Heart right ventricle (tissue), 16 donors: ENCODE measurements at regions of chr11 and their contacts with region 1.

Region 1: GRCh38 chr11:90453525-90453924 is 230.7 kb upstream of the CHORDC1 start:
- DNase-seq: no peak
- ATAC-seq: no peak
- H3K4me3 ChIP-seq: no peak overlapping the region
- H3K27ac ChIP-seq: no peak overlapping the region
- H3K4me1 ChIP-seq: peaks cover 0 to 1% (median 0%) of the 10 kb centered on the region in 9 donors
- H3K27me3 ChIP-seq: no peaks in the 10 kb centered on the region
- CTCF ChIP-seq: no peak

Region 2: DNA sequence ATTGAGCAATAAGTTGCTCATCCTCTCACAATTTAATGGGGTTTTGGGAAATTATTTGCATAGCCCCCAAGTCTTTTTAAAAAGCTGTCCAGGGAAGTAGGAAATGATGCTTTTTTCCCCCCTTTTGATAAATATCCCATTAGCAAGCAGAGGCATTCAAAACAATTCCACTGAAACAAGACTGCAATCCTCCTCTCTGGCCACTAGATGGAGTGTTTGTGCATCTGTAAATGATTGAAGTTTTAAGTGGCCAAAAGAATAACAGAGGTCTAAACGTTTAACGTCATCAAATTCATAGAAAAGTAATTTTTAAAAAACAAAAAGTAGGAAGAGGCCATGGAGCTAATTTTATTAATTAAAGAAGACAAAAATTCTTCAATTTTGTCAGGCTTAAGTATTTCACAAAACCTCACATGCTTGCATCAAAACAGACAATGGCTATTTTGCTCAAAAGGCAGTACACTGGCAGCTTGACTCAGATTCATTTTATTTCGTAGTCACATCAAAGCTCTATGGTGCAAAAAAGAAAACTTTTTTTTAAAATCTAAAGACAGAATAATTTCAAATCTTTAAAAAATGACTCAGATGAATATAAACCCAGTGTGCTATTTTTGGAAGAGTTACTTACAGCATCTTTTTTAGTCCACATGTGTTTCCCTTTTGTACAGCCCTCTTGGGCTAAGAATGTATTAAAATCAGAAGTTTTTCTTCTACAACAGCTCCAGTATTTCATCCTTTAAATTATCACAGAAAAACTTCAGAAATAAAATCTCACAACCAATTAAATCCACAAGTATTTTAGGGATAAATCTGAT is 248.5 kb before region 1 on chr11:
- intact Hi-C with region 1: loop called in 1 of 10 experiments (anchors 10 kb)
- DNase-seq: no peak
- ATAC-seq: no peak
- H3K4me3 ChIP-seq: no peak overlapping the region
- H3K27ac ChIP-seq: no peak overlapping the region
- H3K4me1 ChIP-seq: peaks cover 0 to 14% (median 0%) of the 10 kb centered on the region in 9 donors
- H3K27me3 ChIP-seq: no peaks in the 10 kb centered on the region
- CTCF ChIP-seq: peak; percentile 76 to 93 (median 87)

Region 3: GRCh38 chr11:90288212-90288821 is 165.2 kb before region 1 on chr11:
- intact Hi-C with region 1: loop called in 3 of 10 experiments (anchors 2 to 5 kb)
- DNase-seq: no peak
- ATAC-seq: no peak
- H3K4me3 ChIP-seq: no peak overlapping the region
- H3K27ac ChIP-seq: no peak overlapping the region
- H3K4me1 ChIP-seq: no peaks in the 10 kb centered on the region
- H3K27me3 ChIP-seq: peaks cover 0 to 2% (median 0%) of the 10 kb centered on the region in 7 donors
- CTCF ChIP-seq: peak; percentile 30 to 75 (median 61)

Region 4: DNA sequence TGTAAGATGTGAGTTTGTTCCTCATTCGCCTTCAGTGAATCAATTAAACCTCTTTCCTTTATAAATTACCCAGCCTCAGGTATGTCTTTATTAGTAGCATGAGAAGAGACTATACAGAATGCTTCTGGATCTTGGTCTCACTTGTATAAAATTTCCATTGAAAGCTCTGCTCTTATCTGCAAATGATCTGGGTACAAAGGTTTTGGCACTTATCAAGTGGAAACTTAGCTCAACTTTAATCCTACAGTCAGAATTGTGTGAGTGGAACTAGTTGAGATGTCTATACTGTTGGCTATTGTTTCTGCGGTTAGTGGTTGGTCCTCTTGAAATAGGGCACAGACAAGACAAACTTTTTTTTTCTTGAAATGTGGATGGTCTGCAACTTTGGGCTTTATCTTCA is 159.4 kb before region 1 on chr11:
- intact Hi-C with region 1: loop called in 3 of 10 experiments (anchors 2 to 5 kb)
- DNase-seq: no peak
- ATAC-seq: no peak
- H3K4me3 ChIP-seq: no peak overlapping the region
- H3K27ac ChIP-seq: no peak overlapping the region
- H3K4me1 ChIP-seq: no peaks in the 10 kb centered on the region
- H3K27me3 ChIP-seq: no peaks in the 10 kb centered on the region
- CTCF ChIP-seq: no peak

Region 5: DNA sequence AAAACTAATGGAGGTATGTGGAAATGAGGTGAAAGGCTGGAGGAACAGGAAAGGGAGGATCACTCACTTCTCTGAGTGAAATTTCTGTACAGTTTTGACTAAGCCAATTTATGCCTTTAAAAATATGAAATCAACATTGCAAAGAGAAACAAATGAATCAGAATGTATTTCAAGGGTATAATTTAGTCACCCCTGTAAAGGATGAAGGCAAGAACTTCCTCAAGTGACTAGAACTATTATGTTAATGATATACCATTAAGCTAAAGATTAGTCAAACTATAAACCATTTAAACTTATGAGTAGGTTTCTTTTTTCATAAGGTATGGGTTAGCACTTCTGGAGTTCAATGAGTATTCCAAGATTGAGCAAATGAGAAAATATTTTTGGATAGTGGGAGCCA is 46.2 kb before region 1 on chr11:
- intact Hi-C with region 1: loop called in 1 of 10 experiments (anchors 1 kb)
- DNase-seq: no peak
- ATAC-seq: no peak
- H3K4me3 ChIP-seq: no peak overlapping the region
- H3K27ac ChIP-seq: no peak overlapping the region
- H3K4me1 ChIP-seq: no peaks in the 10 kb centered on the region
- H3K27me3 ChIP-seq: no peaks in the 10 kb centered on the region
- CTCF ChIP-seq: no peak

Region 6: GRCh38 chr11:90564531-90564930 is 111.0 kb after region 1 on chr11:
- intact Hi-C with region 1: no loop called
- DNase-seq: no peak
- ATAC-seq: no peak
- H3K4me3 ChIP-seq: no peak overlapping the region
- H3K27ac ChIP-seq: no peak overlapping the region
- H3K4me1 ChIP-seq: no peaks in the 10 kb centered on the region
- H3K27me3 ChIP-seq: no peaks in the 10 kb centered on the region
- CTCF ChIP-seq: no peak